Activated T-helper 2 cell treated with anti-CD3 and anti-CD28 coated beads, Interferon-gamma antibody, Interleukin-2, Interleukin-4, amounts not matched to agents 10 μg/mL and 5 μg/mL and 100 μg/mL, durations not matched to agents 14 hours and 24 hours and 36 hours (primary cell): ENCODE measurements at regions of chr16 and their contacts with region 1.

Region 1: DNA sequence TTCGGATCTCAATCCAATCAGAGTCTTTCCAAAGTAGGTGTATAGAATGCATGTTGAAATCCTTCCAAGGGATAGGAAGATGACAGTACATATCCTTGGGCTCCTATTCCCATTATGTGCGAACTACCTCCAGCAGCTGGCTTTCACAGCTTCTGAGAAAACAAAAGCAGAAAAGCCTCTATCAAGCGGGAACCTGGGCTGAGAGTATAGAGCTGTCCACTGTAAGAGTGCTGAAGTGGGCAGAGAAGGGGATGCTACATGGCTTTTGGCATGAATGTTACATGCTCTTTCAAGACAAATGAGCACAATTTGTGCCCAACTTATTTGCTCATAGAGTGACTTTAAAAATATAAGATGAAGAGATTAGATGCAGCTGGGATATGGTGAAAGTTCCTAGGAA is 993.5 kb downstream of the CDH8 start:
- DNase-seq: no peak
- H3K4me3 Mint-ChIP-seq: no peak overlapping the region
- H3K27ac Mint-ChIP-seq: no peak overlapping the region
- H3K4me1 Mint-ChIP-seq: no peaks in the 10 kb centered on the region
- H3K27me3 Mint-ChIP-seq: no peaks in the 10 kb centered on the region

Region 2: GRCh38 chr16:60945225-60945624 is 97.5 kb before region 1 on chr16:
- intact Hi-C with region 1: no loop called
- DNase-seq: no peak
- H3K4me3 Mint-ChIP-seq: no peak overlapping the region
- H3K27ac Mint-ChIP-seq: no peak overlapping the region
- H3K4me1 Mint-ChIP-seq: no peaks in the 10 kb centered on the region
- H3K27me3 Mint-ChIP-seq: no peaks in the 10 kb centered on the region

Region 3: DNA sequence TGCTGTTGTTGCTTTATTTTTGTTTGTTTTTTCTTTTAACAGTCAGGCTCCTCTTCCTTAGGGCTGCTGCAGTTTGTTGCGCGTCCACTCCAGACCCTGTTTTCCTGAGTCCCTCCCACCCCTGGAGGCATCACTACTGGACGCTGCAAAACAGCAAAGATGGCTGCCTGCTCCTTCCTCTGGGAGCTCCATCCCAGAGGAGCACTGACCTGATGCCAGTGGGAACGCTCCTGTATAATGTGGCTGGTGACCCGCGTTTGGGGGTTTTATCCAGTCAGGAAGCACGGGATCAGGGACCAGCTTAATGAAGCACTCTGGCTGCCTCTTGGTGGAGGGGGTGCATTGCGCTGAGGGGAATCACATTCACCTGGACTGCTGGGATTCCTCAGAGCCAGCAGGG is 12.1 kb before region 1 on chr16:
- intact Hi-C with region 1: loop called (anchors 1 kb)
- DNase-seq: no peak
- H3K4me3 Mint-ChIP-seq: no peak overlapping the region
- H3K27ac Mint-ChIP-seq: no peak overlapping the region
- H3K4me1 Mint-ChIP-seq: no peaks in the 10 kb centered on the region
- H3K27me3 Mint-ChIP-seq: no peaks in the 10 kb centered on the region